Activated naive CD4-positive, alpha-beta T cell treated with anti-CD3 and anti-CD28 coated beads for 36 hours (primary cell): ENCODE measurements at regions of chr1 and their contacts with region 1.

Region 1: DNA sequence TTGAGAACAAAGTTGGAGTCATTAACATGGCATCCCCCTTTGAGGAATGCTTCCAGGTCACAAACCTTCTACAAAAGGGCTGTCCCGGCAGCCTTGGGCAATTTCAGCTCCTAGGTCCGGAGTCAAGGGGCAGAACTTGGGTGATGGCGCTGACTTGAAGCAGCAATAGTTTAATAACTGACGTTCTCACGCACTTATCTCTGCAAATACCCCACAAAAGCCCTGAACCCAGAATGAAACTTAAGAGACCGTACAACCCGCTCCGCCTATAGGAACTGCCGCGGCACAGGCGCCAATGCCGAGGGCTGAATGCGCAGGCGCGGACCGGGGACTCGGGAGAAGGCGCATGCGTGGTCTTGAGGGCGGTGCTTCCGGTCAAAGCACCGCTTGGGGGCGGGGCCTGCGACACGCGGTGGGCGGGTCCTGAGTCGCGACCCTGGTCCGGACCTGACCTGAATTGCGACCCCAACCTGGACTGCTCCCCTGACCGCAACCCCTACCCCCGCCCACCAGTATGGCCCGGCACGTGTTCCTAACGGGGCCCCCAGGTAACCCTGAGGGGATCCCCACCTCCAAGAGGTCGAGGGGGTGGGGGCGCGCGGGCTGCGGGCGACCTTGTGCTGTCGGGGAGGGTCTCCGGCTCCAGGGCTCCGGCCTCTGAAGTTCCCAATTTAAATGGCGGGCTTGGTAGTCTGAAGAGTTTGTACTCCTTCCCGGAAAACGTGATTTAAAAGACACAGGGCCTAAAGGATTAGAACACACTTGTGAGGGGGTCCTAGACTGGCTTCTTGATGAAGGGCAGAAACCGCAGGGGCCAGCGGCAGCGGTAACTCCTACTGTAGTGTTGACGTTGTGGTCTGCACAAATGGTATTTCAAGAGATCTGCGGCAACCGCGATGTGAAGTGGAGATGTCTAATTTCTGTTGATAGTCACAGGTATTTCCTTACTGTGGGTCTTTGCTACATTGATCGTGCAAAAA is at the start of gene NTPCR:
- DNase-seq: peak; percentile 96
- H3K4me3 Mint-ChIP-seq: peak within 1 kb of the TSS; percentile 92
- H3K27ac Mint-ChIP-seq: peak within 1 kb of the TSS; percentile 92
- H3K4me1 Mint-ChIP-seq: peaks cover 31% of the 10 kb centered on the region
- H3K27me3 Mint-ChIP-seq: no peaks in the 10 kb centered on the region
- total RNA-seq, gene NTPCR: 53.1 TPM

Region 2: DNA sequence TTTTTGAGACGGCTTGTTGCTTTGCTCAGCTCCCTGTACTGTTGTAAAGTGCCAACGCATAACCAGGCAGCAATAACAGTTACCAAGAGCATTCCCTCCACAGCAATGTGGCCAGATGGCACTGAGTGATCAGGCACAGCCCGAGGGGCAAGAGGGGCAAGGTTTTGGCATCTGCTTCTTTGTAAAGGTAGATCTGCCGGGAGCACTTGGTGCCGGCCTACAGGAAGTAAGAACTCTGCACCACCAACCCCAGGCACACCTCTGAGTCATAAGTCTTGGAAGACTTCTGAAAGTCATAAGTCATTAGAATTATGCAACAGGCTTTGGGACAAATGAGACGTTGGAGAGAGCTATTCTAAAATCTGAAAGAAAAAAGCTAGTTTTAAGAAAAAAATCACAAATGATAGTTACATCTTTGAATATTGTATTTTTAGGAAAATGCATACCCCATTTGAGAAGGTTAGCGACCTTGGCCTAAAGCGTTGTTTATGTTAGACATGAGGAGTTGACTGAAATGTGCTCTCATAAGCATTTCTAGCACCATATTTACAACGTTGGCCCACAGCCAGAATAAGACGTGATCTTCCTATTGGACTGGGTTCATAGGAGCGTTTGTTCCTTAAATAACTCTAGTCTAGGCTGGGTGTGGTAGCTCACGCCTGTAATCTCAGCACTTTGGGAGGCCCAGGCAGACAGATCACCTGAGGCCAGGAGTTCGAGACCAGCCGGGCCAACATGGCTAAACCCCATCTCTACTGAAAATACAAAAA is 183.0 kb before region 1 on chr1:
- CTCF ChIA-PET with region 1: no interaction called
- intact Hi-C with region 1: no loop called
- DNase-seq: no peak
- H3K4me3 Mint-ChIP-seq: no peak overlapping the region
- H3K27ac Mint-ChIP-seq: no peak overlapping the region
- H3K4me1 Mint-ChIP-seq: no peaks in the 10 kb centered on the region
- H3K27me3 Mint-ChIP-seq: peaks cover 5% of the 10 kb centered on the region

Region 3: GRCh38 chr1:232805269-232806185 is 145.0 kb before region 1 on chr1 and contains the start of gene MAP10:
- CTCF ChIA-PET with region 1: no interaction called
- intact Hi-C with region 1: loop called (anchors 1 kb)
- DNase-seq: peak; percentile 85
- H3K4me3 Mint-ChIP-seq: peak within 1 kb of the TSS; percentile 81
- H3K27ac Mint-ChIP-seq: peak within 1 kb of the TSS; percentile 59
- H3K4me1 Mint-ChIP-seq: peaks cover 17% of the 10 kb centered on the region
- H3K27me3 Mint-ChIP-seq: peaks cover 2% of the 10 kb centered on the region
- total RNA-seq, gene MAP10: 0.43 to 0.54 TPM

Region 4: GRCh38 chr1:232923739-232924386 is 26.6 kb before region 1 on chr1:
- CTCF ChIA-PET with region 1: interaction called, 4 read pairs
- intact Hi-C with region 1: loop called (anchors 1 kb)
- DNase-seq: peak; percentile 66
- H3K4me3 Mint-ChIP-seq: no peak overlapping the region
- H3K27ac Mint-ChIP-seq: peak overlapping the region; percentile 78
- H3K4me1 Mint-ChIP-seq: peaks cover 31% of the 10 kb centered on the region
- H3K27me3 Mint-ChIP-seq: no peaks in the 10 kb centered on the region

Region 5: DNA sequence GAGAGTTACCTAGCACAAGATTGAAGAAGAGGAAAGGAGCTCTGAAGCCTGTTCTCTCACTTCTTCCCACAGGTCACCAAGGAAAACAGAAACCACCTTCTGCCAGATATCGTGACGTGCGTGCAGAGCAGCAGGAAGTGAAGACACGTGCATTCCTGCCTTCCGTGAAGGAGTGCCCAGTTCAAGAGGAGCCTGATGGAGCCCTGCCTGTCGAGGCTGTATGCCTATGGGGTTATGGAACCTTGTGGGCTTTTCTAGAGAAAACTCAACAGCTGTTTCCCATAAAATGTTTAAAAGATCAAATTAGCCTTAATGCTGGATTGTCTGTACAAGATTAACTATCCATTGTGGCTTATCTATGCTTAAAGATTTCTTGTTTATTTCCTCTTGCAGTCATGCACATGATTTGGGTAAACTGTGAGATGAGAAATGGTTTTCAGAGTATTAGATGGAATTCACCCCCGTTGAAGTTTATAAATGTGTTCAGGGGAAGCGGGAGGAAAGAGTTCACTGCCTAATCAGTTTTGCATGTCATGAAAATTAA is 27.7 kb after region 1 on chr1:
- CTCF ChIA-PET with region 1: no interaction called
- intact Hi-C with region 1: loop called (anchors 1 kb)
- DNase-seq: peak; percentile 56
- H3K4me3 Mint-ChIP-seq: no peak overlapping the region
- H3K27ac Mint-ChIP-seq: peak overlapping the region; percentile 18
- H3K4me1 Mint-ChIP-seq: peaks cover 18% of the 10 kb centered on the region
- H3K27me3 Mint-ChIP-seq: no peaks in the 10 kb centered on the region

Region 6: DNA sequence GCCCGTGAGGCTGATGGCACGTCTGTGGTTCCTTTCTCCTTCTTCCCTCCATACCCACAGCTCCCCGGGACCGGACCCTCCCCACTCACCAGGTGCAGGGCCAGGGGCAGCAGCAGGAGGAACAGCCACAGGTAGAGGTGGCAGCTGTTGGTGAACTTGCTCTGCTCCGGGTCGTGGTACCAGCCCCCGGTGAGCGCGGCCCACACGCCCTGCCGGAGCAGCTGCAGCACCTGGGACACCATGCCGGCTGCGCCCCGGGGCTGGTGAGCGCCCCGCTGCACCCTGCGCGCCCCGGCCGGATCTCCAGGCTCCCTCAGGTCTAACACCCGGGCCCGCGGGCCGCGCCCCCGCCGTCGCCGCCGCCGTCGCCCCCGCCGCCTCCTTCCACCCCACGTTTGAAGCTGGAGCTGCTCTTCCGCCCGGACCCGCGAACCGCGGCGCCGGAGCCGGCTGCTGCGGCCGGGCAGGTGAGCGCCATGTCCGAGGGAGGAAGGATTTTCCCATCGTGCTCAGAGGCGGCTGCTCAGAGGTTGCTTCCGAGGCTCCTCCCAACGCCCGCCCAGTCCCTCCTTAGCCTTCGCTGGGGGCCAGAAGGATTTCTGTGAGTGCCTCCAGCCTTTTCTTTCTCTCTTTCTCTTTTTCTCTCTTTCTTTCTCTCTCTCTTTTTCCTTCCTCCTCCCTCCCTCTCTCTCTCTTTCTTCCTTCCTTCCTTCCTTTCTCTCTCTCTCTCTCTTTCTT is 344.9 kb after region 1 on chr1 and contains the start of gene PCNX2:
- CTCF ChIA-PET with region 1: no interaction called
- intact Hi-C with region 1: loop called (anchors 5 kb)
- DNase-seq: peak; percentile 77
- H3K4me3 Mint-ChIP-seq: peak within 1 kb of the TSS; percentile 91
- H3K27ac Mint-ChIP-seq: peak within 1 kb of the TSS; percentile 90
- H3K4me1 Mint-ChIP-seq: peaks cover 25% of the 10 kb centered on the region
- H3K27me3 Mint-ChIP-seq: no peaks in the 10 kb centered on the region
- total RNA-seq, gene PCNX2: 11.5 to 12.2 TPM

Region 7: DNA sequence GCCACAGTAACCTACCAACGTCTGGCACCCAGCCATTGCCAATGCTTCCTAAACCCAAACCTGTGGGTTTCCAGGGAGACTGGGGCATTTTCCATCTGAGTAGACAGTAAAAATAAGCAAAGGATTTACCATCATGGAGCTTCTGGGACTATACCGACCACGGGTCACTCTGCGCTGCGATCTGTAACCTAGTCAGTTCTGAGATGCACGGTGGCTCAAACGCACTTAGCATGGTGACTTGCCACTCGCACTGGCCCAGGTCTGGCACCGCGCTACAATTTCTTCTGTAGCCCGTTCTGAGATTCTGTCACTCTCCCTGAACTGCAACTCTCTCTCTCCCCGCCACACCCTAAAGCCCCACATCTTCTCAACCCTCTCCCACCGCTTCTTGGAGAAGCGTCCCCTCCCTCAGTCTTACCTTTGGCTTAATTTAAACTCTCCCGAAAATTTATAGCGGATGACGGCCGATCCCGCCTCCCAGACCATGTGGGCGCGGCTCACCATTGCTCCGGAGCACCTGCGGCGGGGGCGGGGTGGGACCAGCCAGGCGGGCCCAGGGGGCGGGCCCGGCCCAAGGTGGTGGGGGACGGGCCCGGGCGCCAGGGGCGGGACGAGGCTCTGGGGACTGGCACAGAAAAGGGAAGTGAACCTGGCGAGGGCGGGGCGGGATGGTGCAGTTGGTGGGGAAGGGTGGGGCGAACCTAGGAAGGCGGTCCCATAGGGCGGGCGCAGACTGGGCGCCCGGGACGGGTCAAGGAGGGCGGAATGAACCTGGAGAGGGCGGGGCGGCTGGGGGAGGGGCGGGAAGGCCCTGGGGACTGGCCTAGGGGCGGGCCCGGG is 376.5 kb after region 1 on chr1:
- CTCF ChIA-PET with region 1: no interaction called
- intact Hi-C with region 1: loop called (anchors 2 kb)
- DNase-seq: peak; percentile 93
- H3K4me3 Mint-ChIP-seq: peak overlapping the region; percentile 67
- H3K27ac Mint-ChIP-seq: no peak overlapping the region
- H3K4me1 Mint-ChIP-seq: peaks cover 10% of the 10 kb centered on the region
- H3K27me3 Mint-ChIP-seq: peaks cover 20% of the 10 kb centered on the region